Activated CD4-positive, alpha-beta T cell treated with anti-CD3 and anti-CD28 coated beads, Interleukin-2, amount 10 ng/mL, durations not matched to agents 24 days and 14 days (primary cell): ENCODE measurements at regions of chr5 and their contacts with region 1.

Region 1: DNA sequence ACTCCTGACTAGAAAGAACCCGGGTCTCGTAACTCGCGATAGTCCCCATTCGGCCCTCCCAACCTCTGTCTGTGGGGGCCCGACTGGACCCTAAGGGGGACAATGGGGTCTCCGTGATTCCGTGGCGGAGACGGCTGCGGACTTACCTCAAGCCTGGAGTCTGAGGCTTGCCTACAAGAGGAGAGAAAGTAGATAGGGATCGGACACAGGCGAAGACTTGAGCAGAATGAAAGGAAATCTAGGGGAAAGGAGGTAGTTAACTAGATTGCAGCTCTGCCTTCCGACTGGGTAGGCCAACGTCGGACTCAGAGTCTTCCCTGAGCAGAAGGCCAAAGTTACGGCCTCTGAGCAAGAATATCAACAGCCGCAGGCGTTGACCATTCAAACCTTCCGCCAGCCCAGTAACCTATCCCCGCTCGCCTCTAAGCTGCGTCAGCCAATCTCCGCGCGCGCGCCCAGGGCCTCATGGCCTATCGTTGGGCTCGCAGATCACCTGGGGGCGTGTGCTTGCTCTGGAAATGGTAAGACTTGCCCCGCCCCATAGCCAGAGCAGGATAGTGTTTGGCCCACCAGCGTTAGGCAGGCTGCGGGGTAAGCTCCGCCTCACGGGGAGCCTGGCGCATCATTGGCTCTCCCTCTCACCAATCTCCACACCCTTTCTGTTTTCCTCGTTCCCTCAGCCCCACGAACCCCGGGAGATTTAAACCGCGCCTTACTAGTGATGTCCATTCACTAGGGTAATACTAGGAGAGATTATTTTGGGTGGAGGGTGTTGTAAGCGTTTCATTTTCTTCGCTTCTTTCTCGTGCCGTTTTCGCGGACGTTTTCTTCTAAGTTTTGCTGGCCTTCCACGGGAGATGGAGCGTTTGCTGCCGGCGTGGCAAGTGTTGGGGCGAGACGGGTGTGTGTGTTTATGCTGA is at the start of gene CDC25C:
- DNase-seq: peak; percentile 99
- H3K4me3 Mint-ChIP-seq: peak within 1 kb of the TSS; percentile 89
- H3K27ac Mint-ChIP-seq: peak within 1 kb of the TSS; percentile 57
- H3K4me1 Mint-ChIP-seq: peaks cover 30% of the 10 kb centered on the region
- H3K27me3 Mint-ChIP-seq: no peaks in the 10 kb centered on the region
- total RNA-seq, gene CDC25C: 6.7 and 7.9 TPM in 2 replicates

Region 2: GRCh38 chr5:138213161-138214029 is 118.3 kb before region 1 on chr5 and contains the start of gene CDC23:
- intact Hi-C with region 1: loop called (anchors 1 kb)
- DNase-seq: peak; percentile 98
- H3K4me3 Mint-ChIP-seq: peak within 1 kb of the TSS; percentile 97
- H3K27ac Mint-ChIP-seq: peak within 1 kb of the TSS; percentile 96
- H3K4me1 Mint-ChIP-seq: peaks cover 14% of the 10 kb centered on the region
- H3K27me3 Mint-ChIP-seq: no peaks in the 10 kb centered on the region
- total RNA-seq, gene CDC23: 46.6 and 47.9 TPM in 2 replicates

Region 3: DNA sequence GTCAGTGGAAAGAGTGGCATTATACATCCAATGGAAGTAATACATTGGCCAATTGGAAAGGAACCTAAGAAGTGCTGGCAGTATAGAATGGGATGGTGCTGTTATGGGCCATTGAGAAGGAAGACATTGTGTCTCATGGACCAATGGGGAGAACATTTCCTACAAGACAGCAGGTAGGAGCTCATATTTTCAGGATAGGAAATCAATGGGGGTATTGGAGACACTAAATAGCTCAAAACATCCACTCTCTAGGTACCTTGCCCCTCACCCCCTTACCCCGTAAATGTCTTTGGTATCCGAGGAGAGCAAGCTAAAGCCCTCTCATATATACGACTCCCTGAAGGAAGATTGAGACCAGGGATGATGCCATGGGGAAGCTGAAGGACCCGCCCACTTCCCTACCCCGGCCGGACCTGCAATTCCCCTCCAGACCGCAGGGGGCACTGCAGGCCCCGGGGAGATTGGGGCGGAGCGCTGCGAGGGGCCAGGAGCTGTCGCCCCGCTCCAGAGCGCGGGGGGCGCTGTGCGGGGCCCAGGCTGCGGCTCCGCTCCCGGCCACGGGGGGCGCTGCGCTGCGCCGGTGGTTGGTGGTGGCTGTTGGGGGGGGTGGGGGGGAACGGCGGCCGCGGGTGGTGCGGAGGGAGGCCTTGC is 20.5 kb after region 1 on chr5 and contains the start of gene KDM3B:
- intact Hi-C with region 1: loop called (anchors 1 kb)
- DNase-seq: peak; percentile 99
- H3K4me3 Mint-ChIP-seq: peak within 1 kb of the TSS; percentile 95
- H3K27ac Mint-ChIP-seq: peak within 1 kb of the TSS; percentile 95
- H3K4me1 Mint-ChIP-seq: peaks cover 37% of the 10 kb centered on the region
- H3K27me3 Mint-ChIP-seq: no peaks in the 10 kb centered on the region
- total RNA-seq, gene KDM3B: 48.7 and 52.7 TPM in 2 replicates

Region 4: GRCh38 chr5:138364576-138364975 is 32.9 kb after region 1 on chr5:
- intact Hi-C with region 1: no loop called
- DNase-seq: no peak
- H3K4me3 Mint-ChIP-seq: no peak overlapping the region
- H3K27ac Mint-ChIP-seq: no peak overlapping the region
- H3K4me1 Mint-ChIP-seq: peaks cover 20% of the 10 kb centered on the region
- H3K27me3 Mint-ChIP-seq: no peaks in the 10 kb centered on the region

Region 5: DNA sequence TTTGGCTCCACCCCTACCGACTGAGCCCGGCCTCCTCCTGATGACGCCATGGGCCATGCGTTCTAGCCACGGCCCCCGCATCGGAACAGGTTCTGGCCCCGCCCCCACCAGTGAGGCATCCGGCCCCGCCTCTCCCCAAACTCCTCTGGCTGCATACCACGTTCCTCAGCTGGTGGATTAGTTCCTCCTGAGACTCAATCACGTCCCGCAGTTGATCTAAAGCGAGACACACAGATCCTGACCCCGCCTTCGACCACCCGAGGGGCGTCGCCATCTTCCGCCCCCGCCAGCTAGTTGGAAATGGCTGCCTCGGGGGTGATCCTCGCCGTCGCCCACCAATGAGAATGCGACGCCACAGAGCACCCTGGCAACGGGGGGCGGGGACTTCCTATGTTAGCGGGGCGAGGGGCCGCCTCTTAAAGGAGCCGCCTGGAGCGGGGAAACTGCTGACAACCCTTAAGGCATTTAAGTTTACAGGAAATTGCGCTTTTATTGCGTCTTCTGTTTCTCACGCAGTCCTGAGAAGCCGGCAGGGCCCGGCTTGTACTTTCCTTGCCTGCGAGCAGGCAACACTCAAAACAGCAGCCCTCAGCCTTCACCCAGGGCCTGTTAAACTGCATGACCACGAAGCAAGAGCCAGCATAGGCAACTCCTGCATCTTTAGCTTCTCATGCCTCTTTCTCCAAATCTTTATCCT is 1072.2 kb after region 1 on chr5 and contains the start of gene SPATA24:
- intact Hi-C with region 1: loop called (anchors 10 kb)
- DNase-seq: peak; percentile 99
- H3K4me3 Mint-ChIP-seq: peak within 1 kb of the TSS; percentile 87
- H3K27ac Mint-ChIP-seq: peak within 1 kb of the TSS; percentile 99
- H3K4me1 Mint-ChIP-seq: peaks cover 37% of the 10 kb centered on the region
- H3K27me3 Mint-ChIP-seq: no peaks in the 10 kb centered on the region
- total RNA-seq, gene SPATA24: 4.2 TPM in 2 replicates